Endothelial cell of umbilical vein (primary cell): ENCODE measurements at regions of chr2 and their contacts with region 1.

Region 1: DNA sequence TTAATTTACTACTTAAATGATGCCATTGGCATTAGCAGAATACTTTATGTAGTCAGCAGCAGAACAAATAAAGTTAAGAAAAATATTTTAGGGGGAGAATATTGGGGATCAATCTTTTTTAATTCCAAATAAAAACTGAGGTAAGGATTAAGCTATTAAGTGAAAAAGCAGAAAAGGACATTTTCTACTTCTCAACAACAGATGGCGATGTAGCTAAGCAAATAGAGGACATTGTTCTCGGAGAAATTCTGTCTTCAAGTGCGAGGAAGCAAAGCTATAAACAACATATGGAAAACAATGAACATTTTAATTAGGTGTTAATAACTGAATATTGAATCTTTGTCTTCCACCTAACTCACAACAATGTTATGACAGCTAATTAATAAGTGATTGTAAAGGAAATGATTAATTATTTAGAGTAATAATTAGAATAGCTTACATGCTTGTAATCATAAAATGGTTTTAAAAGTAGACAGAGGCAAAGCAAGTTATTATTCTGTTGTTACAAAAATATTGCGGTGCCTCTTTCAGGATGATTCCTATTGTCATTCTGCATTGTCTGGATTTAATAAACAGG is 32.9 kb upstream of the CCDC93 start:
- DNase-seq: peak; percentile 60
- H3K4me3 ChIP-seq: no peak overlapping the region
- H3K27ac ChIP-seq: no peak overlapping the region
- H3K4me1 ChIP-seq: peaks cover 26% of the 10 kb centered on the region
- H3K27me3 ChIP-seq: peaks cover 10 to 13% of the 10 kb centered on the region in 2 experiments
- CTCF ChIP-seq: peak; percentile 41 to 44
- POLR2A ChIP-seq: no peak

Region 2: DNA sequence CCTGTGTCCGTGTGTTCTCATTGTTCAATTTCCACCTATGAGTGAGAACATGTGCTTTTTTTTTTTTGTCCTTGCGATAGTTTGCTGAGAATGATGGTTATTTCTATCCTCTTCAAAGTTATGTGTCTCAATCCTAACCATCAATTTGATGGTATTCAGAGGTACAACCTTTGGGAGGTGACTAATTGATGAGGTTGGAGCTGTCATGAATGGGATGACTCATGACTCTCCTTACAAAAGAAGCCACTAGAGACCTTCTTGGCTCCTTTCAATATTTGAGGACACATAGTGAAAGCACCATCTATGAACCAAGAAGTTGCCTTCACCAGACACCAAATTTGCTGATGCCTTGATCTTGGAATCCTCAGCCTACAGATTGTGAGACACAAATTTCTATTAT is 909.4 kb before region 1 on chr2:
- CTCF ChIA-PET with region 1: no interaction called
- POLR2A ChIA-PET with region 1: no interaction called
- dilution Hi-C with region 1: no loop called
- intact Hi-C with region 1: no loop called
- DNase-seq: no peak
- H3K4me3 ChIP-seq: no peak overlapping the region
- H3K27ac ChIP-seq: no peak overlapping the region
- H3K4me1 ChIP-seq: no peaks in the 10 kb centered on the region
- H3K27me3 ChIP-seq: no peaks in the 10 kb centered on the region
- CTCF ChIP-seq: no peak
- POLR2A ChIP-seq: no peak

Region 3: DNA sequence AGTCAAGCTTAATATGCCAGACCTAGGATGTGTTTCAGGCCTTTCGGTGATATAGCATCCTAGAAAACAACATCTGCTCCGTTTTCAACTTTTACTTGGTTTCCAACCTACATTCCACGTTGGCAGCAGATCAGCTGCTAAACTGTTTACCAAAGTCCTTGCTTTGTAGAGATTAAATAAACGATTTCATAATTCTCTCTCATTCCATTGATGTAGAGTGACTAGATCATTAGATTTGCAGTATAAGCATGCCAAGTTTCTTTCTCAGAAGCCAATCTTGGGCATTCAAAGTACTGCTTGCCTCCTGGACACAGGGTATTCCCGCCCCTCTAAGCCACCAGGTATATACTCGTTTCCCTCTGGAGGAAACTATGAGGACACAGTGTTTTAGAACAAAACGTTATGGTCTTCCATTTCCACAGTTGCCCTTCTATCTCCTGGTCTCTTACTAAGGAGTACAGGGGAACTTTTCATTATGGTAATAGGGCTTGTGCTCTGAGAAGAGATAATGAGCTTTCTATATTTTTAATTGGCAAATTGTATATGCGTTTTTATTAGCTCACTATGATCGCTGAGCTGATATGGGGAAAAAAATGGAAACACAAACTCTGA is 31.0 kb after region 1 on chr2:
- CTCF ChIA-PET with region 1: interaction called, 12 read pairs
- POLR2A ChIA-PET with region 1: no interaction called
- dilution Hi-C with region 1: no loop called
- intact Hi-C with region 1: no loop called
- DNase-seq: no peak
- H3K4me3 ChIP-seq: no peak overlapping the region
- H3K27ac ChIP-seq: no peak overlapping the region
- H3K4me1 ChIP-seq: no peaks in the 10 kb centered on the region
- H3K27me3 ChIP-seq: peaks cover 33 to 48% of the 10 kb centered on the region in 2 experiments
- CTCF ChIP-seq: no peak
- POLR2A ChIP-seq: no peak

Region 4: GRCh38 chr2:118148809-118149208 is 102.1 kb after region 1 on chr2:
- CTCF ChIA-PET with region 1: interaction called, 112 read pairs
- POLR2A ChIA-PET with region 1: no interaction called
- dilution Hi-C with region 1: no loop called
- intact Hi-C with region 1: loop called (anchors 1 kb)
- DNase-seq: peak; percentile 44
- H3K4me3 ChIP-seq: no peak overlapping the region
- H3K27ac ChIP-seq: no peak overlapping the region
- H3K4me1 ChIP-seq: no peaks in the 10 kb centered on the region
- H3K27me3 ChIP-seq: peaks cover 0 to 2% of the 10 kb centered on the region in 2 experiments
- CTCF ChIP-seq: peak in 1 of 2 donors; percentile 24
- POLR2A ChIP-seq: no peak

Region 5: DNA sequence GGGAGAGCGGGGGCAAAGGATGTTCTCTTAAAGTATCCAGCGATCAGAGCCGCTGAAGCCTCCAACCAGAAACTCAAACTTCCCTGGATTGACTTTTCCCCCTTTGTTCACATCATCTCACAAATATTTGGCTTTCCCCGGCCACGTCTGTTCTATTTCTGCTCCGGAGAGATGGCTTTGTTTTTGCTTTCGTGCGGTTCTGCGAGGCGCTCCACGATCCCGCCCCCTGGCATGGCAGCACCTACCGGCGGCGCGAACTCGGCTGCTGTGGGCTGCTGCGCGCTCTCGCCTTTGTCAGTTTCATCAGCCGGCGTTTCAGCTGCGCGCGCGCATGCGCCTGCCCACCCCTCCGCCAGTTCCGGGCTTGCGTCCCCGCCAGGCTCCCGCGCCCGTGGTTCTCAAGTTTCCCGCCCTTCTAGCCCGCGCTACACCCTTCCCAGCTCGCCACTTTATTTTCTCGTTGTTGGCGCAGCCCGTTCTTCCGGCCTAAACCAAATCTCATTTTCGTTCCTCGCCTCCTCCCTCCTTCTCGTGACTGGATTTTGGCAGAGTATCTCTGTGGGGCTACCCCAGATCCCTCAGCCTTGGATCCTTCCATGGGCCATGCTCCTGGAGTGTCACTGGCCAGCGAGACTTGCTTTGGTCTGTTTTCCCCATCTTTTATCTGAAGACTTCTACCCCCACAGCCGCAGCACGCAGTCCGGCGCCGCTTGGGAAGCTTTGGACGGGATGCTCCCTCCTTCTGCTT is 139.6 kb after region 1 on chr2:
- CTCF ChIA-PET with region 1: interaction called, 50 read pairs
- POLR2A ChIA-PET with region 1: no interaction called
- dilution Hi-C with region 1: no loop called
- intact Hi-C with region 1: no loop called
- DNase-seq: peak; percentile 80
- H3K4me3 ChIP-seq: peak overlapping the region; percentile 51 to 76 (median 60)
- H3K27ac ChIP-seq: peak overlapping the region; percentile 46
- H3K4me1 ChIP-seq: peaks cover 3% of the 10 kb centered on the region
- H3K27me3 ChIP-seq: peaks cover 2 to 13% of the 10 kb centered on the region in 2 experiments
- CTCF ChIP-seq: peak in 1 of 2 donors; percentile 11
- POLR2A ChIP-seq: peak; percentile 77

Region 6: GRCh38 chr2:118221666-118222594 is 175.2 kb after region 1 on chr2:
- CTCF ChIA-PET with region 1: interaction called, 64 read pairs
- POLR2A ChIA-PET with region 1: no interaction called
- dilution Hi-C with region 1: no loop called
- intact Hi-C with region 1: loop called (anchors 1 kb)
- DNase-seq: peak; percentile 69
- H3K4me3 ChIP-seq: no peak overlapping the region
- H3K27ac ChIP-seq: no peak overlapping the region
- H3K4me1 ChIP-seq: peaks cover 6% of the 10 kb centered on the region
- H3K27me3 ChIP-seq: peaks cover 41 to 65% of the 10 kb centered on the region in 2 experiments
- CTCF ChIP-seq: peak; percentile 46 to 70
- POLR2A ChIP-seq: no peak

Region 7: DNA sequence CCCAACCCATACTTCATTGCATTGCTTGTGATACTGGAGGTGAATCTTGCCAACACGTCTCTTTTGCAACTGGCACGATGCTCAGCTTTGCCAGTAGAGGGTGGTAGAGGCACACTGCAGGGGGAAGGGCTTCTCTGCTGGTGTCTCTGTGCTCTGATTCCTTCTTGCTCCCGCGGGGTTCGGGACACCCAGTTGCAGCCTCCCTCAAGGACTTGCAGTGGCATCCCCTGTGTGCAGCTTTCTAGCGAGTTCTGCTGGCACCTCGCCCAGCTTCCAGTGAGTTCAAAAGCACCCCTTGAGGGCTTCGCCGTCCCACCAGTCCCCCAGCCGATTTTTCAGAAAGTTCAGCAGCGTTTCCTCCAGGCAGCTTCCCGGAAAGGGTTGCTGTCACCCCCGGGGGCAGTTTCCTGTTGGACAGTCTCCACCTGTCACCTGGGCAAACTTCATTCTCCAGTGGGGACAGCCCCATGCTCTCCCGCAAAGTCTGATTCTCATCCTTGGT is 836.0 kb after region 1 on chr2:
- CTCF ChIA-PET with region 1: interaction called, 14 read pairs
- POLR2A ChIA-PET with region 1: no interaction called
- dilution Hi-C with region 1: no loop called
- intact Hi-C with region 1: no loop called
- DNase-seq: peak; percentile 35
- H3K4me3 ChIP-seq: no peak overlapping the region
- H3K27ac ChIP-seq: no peak overlapping the region
- H3K4me1 ChIP-seq: no peaks in the 10 kb centered on the region
- H3K27me3 ChIP-seq: no peaks in the 10 kb centered on the region
- CTCF ChIP-seq: peak; percentile 70 to 91
- POLR2A ChIP-seq: no peak